Transverse colon (tissue), 4 donors: ENCODE measurements at regions of chr18 and their contacts with region 1.

Region 1: DNA sequence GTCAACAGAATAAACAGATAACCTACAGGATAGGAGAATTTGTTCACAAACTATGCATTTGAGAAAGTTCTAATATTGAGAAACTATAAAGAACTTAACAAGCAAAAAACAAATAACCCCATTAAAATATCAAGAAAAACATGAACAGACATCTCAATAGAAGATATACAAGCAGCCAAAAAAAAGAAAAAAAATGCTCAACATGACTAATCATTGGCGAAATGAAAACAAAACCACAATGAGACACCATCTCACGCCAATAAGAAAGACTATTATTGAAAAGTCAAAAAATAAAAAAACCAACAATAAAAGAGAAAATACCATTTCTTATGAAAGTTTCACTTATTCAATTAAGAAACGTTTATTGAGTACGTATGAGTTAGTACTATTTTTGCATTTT is 800.5 kb downstream of the CBLN2 start:
- DNase-seq: no peak
- H3K4me3 ChIP-seq: no peak overlapping the region
- H3K27ac ChIP-seq: no peak overlapping the region
- H3K4me1 ChIP-seq: no peaks in the 10 kb centered on the region
- H3K27me3 ChIP-seq: no peaks in the 10 kb centered on the region
- CTCF ChIP-seq: no peak
- EP300 ChIP-seq: no peak
- POLR2A ChIP-seq: no peak

Region 2: DNA sequence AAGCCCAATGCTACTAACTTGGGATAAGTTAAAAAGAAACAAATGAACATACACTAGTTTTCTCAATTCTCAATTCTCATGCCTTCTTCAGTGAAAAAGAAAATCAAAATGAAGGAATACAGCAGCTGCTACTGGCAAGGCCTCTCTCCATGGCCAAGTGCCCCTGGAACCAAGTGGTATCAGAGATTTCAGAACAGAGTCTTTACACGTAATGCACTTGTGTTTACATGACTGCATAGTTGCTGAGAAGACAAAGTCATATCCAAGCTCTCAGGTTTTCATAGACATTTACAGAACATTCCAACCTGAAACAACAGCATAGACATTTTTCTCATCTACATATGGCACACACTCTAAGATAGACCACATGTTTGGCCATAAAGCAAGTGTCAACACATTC is 10.6 kb after region 1 on chr18:
- in situ Hi-C with region 1: no loop called
- intact Hi-C with region 1: loop called (anchors 2 kb)
- DNase-seq: no peak
- H3K4me3 ChIP-seq: no peak overlapping the region
- H3K27ac ChIP-seq: no peak overlapping the region
- H3K4me1 ChIP-seq: no peaks in the 10 kb centered on the region
- H3K27me3 ChIP-seq: no peaks in the 10 kb centered on the region
- CTCF ChIP-seq: no peak
- EP300 ChIP-seq: no peak
- POLR2A ChIP-seq: no peak